ENCODE measurements at regions of chr19 and their contacts with region 1.

Region 1: DNA sequence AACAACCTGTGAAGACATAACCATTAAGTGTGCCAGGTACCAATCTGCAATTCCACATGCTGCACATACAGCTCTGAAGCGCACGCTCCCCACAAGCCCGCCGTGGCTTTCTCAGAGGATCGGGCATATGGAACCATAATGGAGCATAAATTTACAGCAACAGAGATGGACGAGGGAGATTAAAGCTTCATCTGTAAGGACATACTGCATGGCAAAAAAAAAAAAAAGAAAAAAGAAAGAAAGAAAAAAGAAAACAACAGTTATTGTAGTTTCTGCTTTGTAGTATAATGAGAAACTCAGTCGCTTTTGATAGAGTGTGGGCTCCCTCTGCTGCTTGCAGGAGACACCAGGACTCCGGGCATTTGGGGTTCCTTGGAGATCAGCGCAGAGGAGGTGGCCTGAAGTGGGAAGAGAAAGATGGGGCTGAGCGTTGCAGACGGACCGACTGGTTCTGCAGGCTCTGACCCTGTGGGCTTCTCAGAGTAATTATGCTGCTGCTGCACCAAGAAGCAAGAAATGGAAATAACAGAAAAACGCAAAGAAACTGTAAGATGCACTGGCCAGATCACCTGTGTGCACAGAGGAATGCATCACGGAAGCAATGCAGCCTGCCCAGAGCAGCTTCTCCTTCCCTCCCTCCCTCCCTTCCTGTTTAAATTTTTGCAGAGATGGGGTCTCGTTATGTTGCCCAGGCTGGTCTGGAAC is 10.8 kb upstream of the PDCD5 start:
- DNase-seq: peak; percentile 18
- H3K4me3 ChIP-seq: no peak overlapping the region
- H3K27ac ChIP-seq: no peak overlapping the region
- H3K27me3 ChIP-seq: no peaks in the 10 kb centered on the region
- CTCF ChIP-seq: peak; percentile 79

Region 2: DNA sequence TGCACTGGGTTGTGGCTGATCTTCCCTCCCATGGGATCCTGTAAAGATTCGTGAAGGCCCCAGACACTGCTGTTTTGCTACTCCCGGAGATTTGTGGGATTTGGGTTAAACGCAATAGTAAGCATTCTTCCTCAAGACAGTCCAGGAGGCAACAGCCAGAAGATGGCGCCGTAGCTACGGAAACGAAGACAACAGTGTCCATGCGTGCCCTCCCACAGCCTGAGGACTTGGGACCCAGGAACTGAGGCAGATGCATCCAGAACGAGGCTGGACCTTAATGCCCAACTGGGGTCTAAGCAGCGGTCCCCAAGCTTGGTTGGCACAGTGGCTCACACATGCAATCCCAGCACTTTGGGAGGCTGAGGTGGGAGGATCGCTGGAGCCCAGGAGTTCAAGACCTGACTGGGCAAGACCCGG is 282.4 kb before region 1 on chr19:
- CTCF ChIA-PET with region 1: interaction called, 37 read pairs
- POLR2A ChIA-PET with region 1: no interaction called
- DNase-seq: peak; percentile 10
- H3K4me3 ChIP-seq: no peak overlapping the region
- H3K27ac ChIP-seq: no peak overlapping the region
- H3K27me3 ChIP-seq: no peaks in the 10 kb centered on the region
- CTCF ChIP-seq: peak; percentile 61

Region 3: GRCh38 chr19:32339988-32340874 is 230.0 kb before region 1 on chr19:
- CTCF ChIA-PET with region 1: interaction called, 65 read pairs
- POLR2A ChIA-PET with region 1: no interaction called
- DNase-seq: no peak
- H3K4me3 ChIP-seq: no peak overlapping the region
- H3K27ac ChIP-seq: no peak overlapping the region
- H3K27me3 ChIP-seq: no peaks in the 10 kb centered on the region
- CTCF ChIP-seq: peak; percentile 65

Region 4: GRCh38 chr19:32464279-32464678 is 106.0 kb before region 1 on chr19:
- CTCF ChIA-PET with region 1: interaction called, 29 read pairs
- POLR2A ChIA-PET with region 1: interaction called, 6 read pairs
- DNase-seq: no peak
- H3K4me3 ChIP-seq: no peak overlapping the region
- H3K27ac ChIP-seq: no peak overlapping the region
- H3K27me3 ChIP-seq: no peaks in the 10 kb centered on the region
- CTCF ChIP-seq: peak; percentile 49

Region 5: GRCh38 chr19:32543107-32543900 is 26.9 kb before region 1 on chr19:
- CTCF ChIA-PET with region 1: no interaction called
- POLR2A ChIA-PET with region 1: no interaction called
- DNase-seq: no peak
- H3K4me3 ChIP-seq: no peak overlapping the region
- H3K27ac ChIP-seq: no peak overlapping the region
- H3K27me3 ChIP-seq: no peaks in the 10 kb centered on the region
- CTCF ChIP-seq: no peak

Region 6: GRCh38 chr19:32611161-32611560 is 40.9 kb after region 1 on chr19:
- CTCF ChIA-PET with region 1: no interaction called
- POLR2A ChIA-PET with region 1: no interaction called
- DNase-seq: no peak
- H3K4me3 ChIP-seq: no peak overlapping the region
- H3K27ac ChIP-seq: no peak overlapping the region
- H3K27me3 ChIP-seq: no peaks in the 10 kb centered on the region
- CTCF ChIP-seq: no peak

Region 7: DNA sequence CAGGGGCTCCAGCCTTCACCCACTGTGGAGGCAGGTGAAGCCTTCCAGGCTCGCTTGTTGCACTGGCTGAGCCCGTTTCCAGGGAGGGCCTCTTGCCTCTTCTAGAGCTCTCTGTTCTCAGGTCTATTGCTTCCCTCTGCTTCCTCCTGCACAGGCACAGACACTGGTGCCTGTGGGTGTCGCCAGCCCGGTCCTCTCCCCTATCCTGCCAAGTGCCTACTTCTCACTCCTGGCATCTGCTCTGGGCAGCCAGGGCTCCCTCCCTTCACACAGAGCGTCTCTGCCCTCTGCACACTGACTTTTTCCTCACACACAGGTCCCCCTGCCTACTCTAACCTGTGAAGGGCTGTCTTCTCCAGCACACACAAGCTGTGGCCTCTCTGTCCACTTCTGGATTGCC is 239.0 kb after region 1 on chr19:
- CTCF ChIA-PET with region 1: no interaction called
- POLR2A ChIA-PET with region 1: no interaction called
- DNase-seq: no peak
- H3K4me3 ChIP-seq: no peak overlapping the region
- H3K27ac ChIP-seq: no peak overlapping the region
- H3K27me3 ChIP-seq: peaks cover 9% of the 10 kb centered on the region
- CTCF ChIP-seq: no peak